ENCODE measurements at regions of chr17 and their contacts with region 1.

Region 1: GRCh38 chr17:38868817-38869525 is 887 bp upstream of the LASP1 start:
- DNase-seq: peak; percentile 85 to 91 (median 87)
- H3K4me3 ChIP-seq: peak overlapping the region; percentile 66 to 99
- H3K4me3 Mint-ChIP-seq: peak overlapping the region; percentile 93 to 100 (median 96)
- H3K27ac ChIP-seq: peak overlapping the region; percentile 88
- H3K27ac Mint-ChIP-seq: peak overlapping the region; percentile 96 to 100 (median 97)
- H3K4me1 ChIP-seq: peaks cover 45% of the 10 kb centered on the region
- H3K4me1 Mint-ChIP-seq: peaks cover 35 to 63% (median 44%) of the 10 kb centered on the region in 4 donors
- H3K27me3 ChIP-seq: no peaks in the 10 kb centered on the region
- H3K27me3 Mint-ChIP-seq: peaks cover 0 to 7% of the 10 kb centered on the region in 2 donors

Region 2: DNA sequence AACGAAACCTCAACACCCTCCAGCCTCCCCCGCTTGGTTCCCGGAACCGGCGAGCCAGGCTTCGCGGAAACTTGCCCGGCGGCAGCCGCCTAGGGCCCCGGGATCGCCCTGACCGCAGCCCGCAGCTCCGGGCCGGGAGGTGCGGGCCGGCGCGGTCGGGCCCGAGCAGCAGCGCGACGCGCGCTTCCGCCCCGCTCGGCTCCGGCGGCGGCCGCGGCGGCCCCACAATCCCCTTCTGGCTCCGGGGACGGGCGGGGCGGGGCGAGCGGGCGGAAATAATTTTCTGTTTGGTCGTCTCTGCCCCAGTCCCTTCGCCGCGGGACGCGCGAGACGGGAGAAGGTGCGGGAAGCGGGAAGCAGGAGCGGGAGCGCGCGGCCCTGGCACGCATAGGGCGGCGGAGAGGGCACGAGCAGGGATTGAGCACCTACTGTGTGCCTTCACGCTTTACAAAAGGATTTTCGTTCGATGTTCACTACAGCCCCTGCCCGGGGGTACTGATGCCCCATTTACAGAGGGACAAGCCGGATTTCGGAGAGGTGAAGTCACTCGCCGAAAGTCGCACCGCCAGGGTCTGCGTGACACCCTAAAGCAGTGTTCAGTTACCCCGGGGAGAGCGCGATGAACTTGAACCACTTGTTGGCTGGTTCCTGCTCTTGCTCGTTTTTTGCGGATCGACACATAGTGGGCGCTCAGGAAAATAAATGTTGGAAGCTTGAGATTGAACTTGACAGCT is 166.6 kb before region 1 on chr17:
- CTCF ChIA-PET with region 1: no interaction called
- POLR2A ChIA-PET with region 1: interaction called, 17 read pairs
- intact Hi-C with region 1: loop called (anchors 5 kb)
- DNase-seq: peak; percentile 75 to 83 (median 80)
- H3K4me3 ChIP-seq: peak overlapping the region; percentile 74 to 97
- H3K4me3 Mint-ChIP-seq: peak overlapping the region; percentile 92 to 99 (median 96)
- H3K27ac ChIP-seq: peak overlapping the region; percentile 94
- H3K27ac Mint-ChIP-seq: peak overlapping the region; percentile 92 to 98 (median 98)
- H3K4me1 ChIP-seq: peaks cover 40% of the 10 kb centered on the region
- H3K4me1 Mint-ChIP-seq: peaks cover 23 to 66% (median 34%) of the 10 kb centered on the region in 4 donors
- H3K27me3 ChIP-seq: no peaks in the 10 kb centered on the region
- H3K27me3 Mint-ChIP-seq: no peaks in the 10 kb centered on the region

Region 3: GRCh38 chr17:38824899-38825761 is 43.8 kb before region 1 on chr17 and contains the start of gene CWC25:
- CTCF ChIA-PET with region 1: interaction called, 4 read pairs
- POLR2A ChIA-PET with region 1: interaction called, 38 read pairs
- intact Hi-C with region 1: loop called (anchors 1 kb)
- DNase-seq: peak; percentile 94 to 99 (median 97)
- H3K4me3 ChIP-seq: peak within 1 kb of the TSS; percentile 71 to 89
- H3K4me3 Mint-ChIP-seq: peak within 1 kb of the TSS; percentile 94 to 99 (median 98)
- H3K27ac ChIP-seq: peak within 1 kb of the TSS; percentile 98
- H3K27ac Mint-ChIP-seq: peak within 1 kb of the TSS; percentile 99 to 100 (median 100)
- H3K4me1 ChIP-seq: peaks cover 23% of the 10 kb centered on the region
- H3K4me1 Mint-ChIP-seq: peaks cover 15 to 42% (median 30%) of the 10 kb centered on the region in 4 donors
- H3K27me3 ChIP-seq: no peaks in the 10 kb centered on the region
- H3K27me3 Mint-ChIP-seq: peaks cover 0 to 5% of the 10 kb centered on the region in 2 donors
- total RNA-seq, gene CWC25: 44.4 to 46.8 TPM

Region 4: DNA sequence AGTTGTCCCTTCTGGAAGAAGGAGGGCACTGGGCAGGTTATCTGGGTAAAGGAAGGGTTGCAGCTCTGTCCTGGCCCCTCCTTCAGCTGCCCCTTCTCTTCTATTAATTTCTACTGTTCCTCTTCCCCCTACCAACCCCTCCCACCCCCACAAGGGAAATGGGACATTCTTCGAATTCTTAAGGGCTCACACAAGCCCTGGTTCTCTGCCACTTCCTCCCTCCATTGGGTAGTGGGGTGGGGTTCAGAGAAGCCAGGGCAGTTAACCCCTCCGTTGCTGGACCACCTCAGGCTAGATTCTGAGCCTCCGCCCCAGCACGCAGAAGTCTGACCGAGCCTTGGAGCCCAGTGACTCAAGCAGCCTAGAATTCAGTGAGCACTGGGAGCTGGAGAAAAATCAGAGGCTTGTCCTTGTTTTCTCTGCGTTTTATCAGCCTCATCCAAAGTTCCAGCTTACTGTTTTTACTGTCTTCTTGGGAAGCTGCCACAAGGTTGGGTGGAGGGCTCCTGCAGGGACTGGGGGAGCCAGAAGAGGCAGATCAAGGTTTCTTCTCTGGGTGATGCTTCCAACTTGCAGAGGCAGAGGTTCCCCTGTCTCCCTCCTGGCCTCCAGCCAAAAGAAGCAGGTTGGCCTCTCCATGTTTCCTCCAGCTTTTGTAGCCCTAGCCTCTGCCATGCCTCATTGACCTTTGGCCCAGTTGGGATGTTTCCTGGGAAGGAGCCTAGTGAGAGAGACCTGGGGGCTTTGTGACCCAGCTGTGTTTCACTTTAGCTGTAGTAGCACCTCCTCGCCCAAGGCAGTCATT is 11.1 kb after region 1 on chr17:
- CTCF ChIA-PET with region 1: interaction called, 7 read pairs
- POLR2A ChIA-PET with region 1: interaction called, 138 read pairs
- intact Hi-C with region 1: no loop called
- DNase-seq: no peak
- H3K4me3 ChIP-seq: no peak overlapping the region
- H3K4me3 Mint-ChIP-seq: peak overlapping the region in 7 of 8 donors; percentile 59 to 77 (median 69)
- H3K27ac ChIP-seq: peak overlapping the region; percentile 31
- H3K27ac Mint-ChIP-seq: peak overlapping the region; percentile 33 to 90 (median 83)
- H3K4me1 ChIP-seq: peaks cover 92% of the 10 kb centered on the region
- H3K4me1 Mint-ChIP-seq: peaks cover 59 to 95% (median 75%) of the 10 kb centered on the region in 4 donors
- H3K27me3 ChIP-seq: no peaks in the 10 kb centered on the region
- H3K27me3 Mint-ChIP-seq: no peaks in the 10 kb centered on the region

Region 5: DNA sequence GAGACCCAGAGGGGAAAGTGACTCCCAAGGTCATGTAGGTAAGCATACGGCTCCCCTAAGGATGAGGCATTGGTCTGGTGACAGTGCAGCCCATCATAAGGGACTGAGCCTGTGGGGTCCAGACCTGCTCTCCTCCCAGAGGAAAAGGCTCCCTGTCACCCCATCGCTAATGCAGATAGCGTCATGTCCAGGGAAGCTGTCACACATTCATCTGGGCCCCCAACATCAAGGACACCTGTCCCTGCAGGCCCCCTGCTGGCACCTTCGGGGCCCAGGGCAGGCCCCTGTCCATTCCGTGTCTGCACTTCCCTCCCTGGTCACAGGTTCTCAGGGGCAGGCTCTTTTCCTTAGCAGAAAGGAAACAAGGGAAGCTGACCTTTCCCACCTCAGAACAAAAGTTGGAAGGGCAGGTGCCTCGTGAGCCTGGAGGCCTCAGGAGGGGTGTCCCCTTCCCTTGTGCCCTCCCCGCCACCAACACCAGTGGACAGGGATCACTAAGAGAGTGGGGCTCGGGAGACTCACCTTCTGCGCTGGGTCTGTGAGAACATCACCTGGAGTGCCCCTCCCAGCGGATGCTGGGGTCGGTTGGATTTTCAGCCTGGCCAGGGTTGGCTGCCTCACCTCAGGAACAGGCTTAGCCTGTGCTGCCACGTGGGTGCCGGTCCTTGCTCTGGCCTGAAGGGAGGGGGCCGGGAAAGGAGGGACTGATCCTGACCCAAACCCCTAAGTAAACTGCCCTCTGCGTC is 39.1 kb after region 1 on chr17:
- CTCF ChIA-PET with region 1: interaction called, 11 read pairs
- POLR2A ChIA-PET with region 1: interaction called, 3 read pairs
- intact Hi-C with region 1: no loop called
- DNase-seq: no peak
- H3K4me3 ChIP-seq: no peak overlapping the region
- H3K4me3 Mint-ChIP-seq: no peak overlapping the region
- H3K27ac ChIP-seq: no peak overlapping the region
- H3K27ac Mint-ChIP-seq: peak overlapping the region in 5 of 7 donors; percentile 11 to 89 (median 47)
- H3K4me1 ChIP-seq: peaks cover 22% of the 10 kb centered on the region
- H3K4me1 Mint-ChIP-seq: peaks cover 9 to 52% (median 30%) of the 10 kb centered on the region in 4 donors
- H3K27me3 ChIP-seq: no peaks in the 10 kb centered on the region
- H3K27me3 Mint-ChIP-seq: no peaks in the 10 kb centered on the region

Region 6: GRCh38 chr17:38982858-38983746 is 114.1 kb after region 1 on chr17:
- CTCF ChIA-PET with region 1: interaction called, 9 read pairs
- POLR2A ChIA-PET with region 1: interaction called, 3 read pairs
- intact Hi-C with region 1: loop called (anchors 5 kb)
- DNase-seq: peak; percentile 58 to 67 (median 59)
- H3K4me3 ChIP-seq: no peak overlapping the region
- H3K4me3 Mint-ChIP-seq: no peak overlapping the region
- H3K27ac ChIP-seq: no peak overlapping the region
- H3K27ac Mint-ChIP-seq: no peak overlapping the region
- H3K4me1 ChIP-seq: no peaks in the 10 kb centered on the region
- H3K4me1 Mint-ChIP-seq: peaks cover 0 to 4% (median 2%) of the 10 kb centered on the region in 4 donors
- H3K27me3 ChIP-seq: no peaks in the 10 kb centered on the region
- H3K27me3 Mint-ChIP-seq: peaks cover 0 to 1% of the 10 kb centered on the region in 2 donors

Region 7: GRCh38 chr17:39118674-39119419 is 249.9 kb after region 1 on chr17:
- CTCF ChIA-PET with region 1: no interaction called
- POLR2A ChIA-PET with region 1: no interaction called
- intact Hi-C with region 1: no loop called
- DNase-seq: no peak
- H3K4me3 ChIP-seq: no peak overlapping the region
- H3K4me3 Mint-ChIP-seq: no peak overlapping the region
- H3K27ac ChIP-seq: no peak overlapping the region
- H3K27ac Mint-ChIP-seq: peak overlapping the region in 1 of 7 donors; percentile 29
- H3K4me1 ChIP-seq: no peaks in the 10 kb centered on the region
- H3K4me1 Mint-ChIP-seq: peaks cover 0 to 3% (median 0%) of the 10 kb centered on the region in 4 donors
- H3K27me3 ChIP-seq: no peaks in the 10 kb centered on the region
- H3K27me3 Mint-ChIP-seq: no peaks in the 10 kb centered on the region

Region 8: DNA sequence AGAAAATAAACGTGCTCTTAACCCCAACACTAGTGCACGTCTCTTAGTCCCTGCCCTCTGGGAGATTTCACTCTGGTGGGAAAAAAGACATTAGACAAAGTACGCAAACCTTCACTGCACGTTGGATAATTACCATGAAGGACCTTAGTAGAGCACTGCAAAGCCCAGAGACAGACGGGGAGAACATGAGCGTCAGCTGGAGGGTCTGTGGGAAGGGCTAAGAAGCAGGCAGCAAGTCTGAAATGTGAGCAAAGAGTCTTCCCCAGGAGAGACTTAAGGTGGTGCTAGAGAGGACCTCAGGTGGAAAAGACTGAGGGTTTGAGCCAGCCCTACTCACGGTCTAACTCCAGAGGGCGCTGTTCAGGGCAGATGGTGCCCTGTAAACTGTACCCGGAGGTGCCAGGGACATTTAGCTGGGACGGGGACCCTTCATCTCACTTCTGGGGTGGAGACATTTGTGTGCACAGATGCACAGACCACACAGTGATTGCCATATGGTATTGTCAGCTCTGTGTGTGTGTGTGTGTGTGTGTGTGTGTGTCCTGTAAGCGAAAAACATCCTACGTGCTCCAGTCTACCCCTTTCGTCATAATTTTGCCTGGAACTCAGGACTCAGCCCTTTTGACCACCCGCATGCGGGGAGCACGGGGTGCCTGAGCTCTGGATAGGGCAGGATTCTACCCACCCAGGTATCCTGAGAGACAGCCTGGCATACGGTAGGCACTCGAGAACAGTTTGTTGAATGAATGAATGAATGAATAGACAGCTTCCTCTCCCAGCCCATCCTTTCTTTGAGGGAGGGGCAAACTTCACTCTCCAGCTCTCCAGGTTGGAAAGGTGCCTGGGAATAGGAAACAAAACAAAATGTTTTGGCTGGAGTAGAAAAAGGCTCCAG is 366.8 kb after region 1 on chr17:
- CTCF ChIA-PET with region 1: no interaction called
- POLR2A ChIA-PET with region 1: interaction called, 10 read pairs
- intact Hi-C with region 1: no loop called
- DNase-seq: peak; percentile 53 to 66 (median 56)
- H3K4me3 ChIP-seq: no peak overlapping the region
- H3K4me3 Mint-ChIP-seq: peak overlapping the region in 2 of 8 donors; percentile 50 to 73
- H3K27ac ChIP-seq: no peak overlapping the region
- H3K27ac Mint-ChIP-seq: peak overlapping the region; percentile 61 to 93 (median 82)
- H3K4me1 ChIP-seq: peaks cover 43% of the 10 kb centered on the region
- H3K4me1 Mint-ChIP-seq: peaks cover 31 to 45% (median 38%) of the 10 kb centered on the region in 4 donors
- H3K27me3 ChIP-seq: no peaks in the 10 kb centered on the region
- H3K27me3 Mint-ChIP-seq: peaks cover 4 to 11% of the 10 kb centered on the region in 2 donors

Measured in CD4-positive, alpha-beta memory T cell (primary cell).